ENCODE measurements at regions of chr2 and their contacts with region 1.

Region 1: GRCh38 chr2:171416009-171416926 is 17.5 kb downstream of the METTL8 start:
- DNase-seq: peak; percentile 72

Region 2: DNA sequence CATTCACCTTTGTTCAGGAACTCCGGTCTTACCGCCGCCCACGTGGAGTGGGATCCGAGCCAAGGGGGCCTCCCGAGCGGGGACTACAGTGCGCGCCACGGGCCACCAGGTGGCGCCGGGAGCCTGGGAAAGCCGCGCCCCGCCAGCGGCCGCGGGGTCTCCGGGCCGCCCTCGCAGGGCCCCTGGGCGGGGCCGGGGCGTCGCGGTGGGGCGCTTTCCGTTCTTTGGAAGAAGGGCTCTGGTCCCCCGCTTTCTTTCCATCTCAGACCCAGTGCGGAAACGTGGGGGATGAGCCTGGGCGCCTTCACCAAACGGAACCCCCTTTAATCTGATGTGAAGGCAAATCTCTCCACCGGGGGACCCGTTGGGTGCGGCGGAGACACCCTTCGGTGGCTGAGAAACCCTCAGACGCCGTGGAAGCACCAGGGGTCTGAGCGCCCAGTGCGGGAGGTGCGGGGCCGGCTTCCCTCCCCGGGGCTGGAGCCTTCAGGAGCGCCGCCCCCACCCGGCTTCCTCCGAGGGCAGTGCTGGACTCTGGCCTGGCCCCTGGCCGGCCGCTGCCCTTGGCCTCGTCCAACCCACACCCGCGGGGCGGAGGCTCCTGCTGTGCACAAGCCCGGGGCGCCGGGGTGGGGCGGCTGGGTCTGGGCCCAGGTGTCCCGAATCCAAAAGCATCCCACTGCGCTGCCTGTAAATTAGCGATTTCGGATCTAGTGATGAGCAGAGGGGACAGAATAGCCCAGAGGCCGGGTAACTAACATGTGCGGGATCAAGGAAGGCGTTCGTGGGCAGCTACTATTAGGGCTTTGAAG is 442.6 kb before region 1 on chr2:
- CTCF ChIA-PET with region 1: interaction called, 19 read pairs
- POLR2A ChIA-PET with region 1: no interaction called
- DNase-seq: peak; percentile 95

Region 3: GRCh38 chr2:171201271-171201670 is 215.0 kb before region 1 on chr2:
- CTCF ChIA-PET with region 1: interaction called, 10 read pairs
- POLR2A ChIA-PET with region 1: no interaction called
- DNase-seq: no peak

Region 4: GRCh38 chr2:171399292-171399691 is 17.0 kb before region 1 on chr2:
- CTCF ChIA-PET with region 1: no interaction called
- POLR2A ChIA-PET with region 1: no interaction called
- DNase-seq: no peak

Measured in HEK293T (cell line).